ENCODE measurements at regions of chr2 and their contacts with region 1.

Region 1: DNA sequence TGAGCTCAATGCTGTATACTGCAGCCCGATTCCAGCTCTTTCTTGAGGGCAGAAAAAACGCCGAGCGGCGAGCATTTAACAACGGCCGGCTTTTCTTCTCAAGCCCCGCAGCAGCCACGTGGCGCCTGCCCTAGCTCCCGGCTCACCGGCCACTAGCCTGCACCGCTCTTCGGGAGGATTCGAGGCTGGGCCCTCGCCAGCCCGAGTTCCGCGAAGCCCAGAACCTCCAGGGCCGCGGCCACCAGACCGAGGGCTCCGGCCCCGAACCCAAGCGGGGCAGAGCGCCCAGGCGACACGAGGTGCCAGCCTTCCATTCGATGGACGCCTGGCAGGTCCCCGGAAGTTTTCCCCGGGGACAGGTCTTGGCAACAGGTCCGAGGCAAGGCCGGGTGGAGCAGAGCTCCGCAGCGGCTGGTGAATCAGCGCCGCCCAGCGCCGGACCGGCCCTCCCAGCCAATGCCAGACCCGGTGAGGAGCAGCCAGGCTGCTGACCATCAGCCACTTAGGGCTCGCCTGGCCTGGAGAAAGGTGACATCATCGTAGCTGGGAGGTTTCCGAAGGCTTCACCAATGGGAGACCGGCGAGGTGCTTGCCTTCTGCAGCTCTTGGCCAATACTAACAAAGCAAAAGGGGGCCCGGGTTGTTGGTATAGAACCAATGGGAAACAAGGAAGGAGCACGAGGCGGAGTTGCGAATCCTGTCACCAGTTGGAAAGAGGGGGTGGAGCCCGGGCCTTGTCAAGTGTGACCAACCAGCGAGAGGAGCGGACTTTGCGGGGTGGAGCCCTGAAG is 544 bp upstream of the MXD1 start:
- DNase-seq: no peak
- ATAC-seq: peak; percentile 91
- H3K4me3 Mint-ChIP-seq: peak overlapping the region; percentile 87
- H3K27ac Mint-ChIP-seq: peak overlapping the region; percentile 91
- H3K4me1 Mint-ChIP-seq: peaks cover 41% of the 10 kb centered on the region
- H3K27me3 Mint-ChIP-seq: no peaks in the 10 kb centered on the region
- CTCF ChIP-seq: no peak

Region 2: GRCh38 chr2:69902213-69902922 is 12.0 kb before region 1 on chr2:
- CTCF ChIA-PET with region 1: no interaction called
- POLR2A ChIA-PET with region 1: interaction called, 5 read pairs
- intact Hi-C with region 1: loop called (anchors 1 kb)
- DNase-seq: no peak
- ATAC-seq: peak; percentile 79
- H3K4me3 Mint-ChIP-seq: peak overlapping the region; percentile 76
- H3K27ac Mint-ChIP-seq: peak overlapping the region; percentile 92
- H3K4me1 Mint-ChIP-seq: peaks cover 41% of the 10 kb centered on the region
- H3K27me3 Mint-ChIP-seq: no peaks in the 10 kb centered on the region
- CTCF ChIP-seq: no peak

Region 3: DNA sequence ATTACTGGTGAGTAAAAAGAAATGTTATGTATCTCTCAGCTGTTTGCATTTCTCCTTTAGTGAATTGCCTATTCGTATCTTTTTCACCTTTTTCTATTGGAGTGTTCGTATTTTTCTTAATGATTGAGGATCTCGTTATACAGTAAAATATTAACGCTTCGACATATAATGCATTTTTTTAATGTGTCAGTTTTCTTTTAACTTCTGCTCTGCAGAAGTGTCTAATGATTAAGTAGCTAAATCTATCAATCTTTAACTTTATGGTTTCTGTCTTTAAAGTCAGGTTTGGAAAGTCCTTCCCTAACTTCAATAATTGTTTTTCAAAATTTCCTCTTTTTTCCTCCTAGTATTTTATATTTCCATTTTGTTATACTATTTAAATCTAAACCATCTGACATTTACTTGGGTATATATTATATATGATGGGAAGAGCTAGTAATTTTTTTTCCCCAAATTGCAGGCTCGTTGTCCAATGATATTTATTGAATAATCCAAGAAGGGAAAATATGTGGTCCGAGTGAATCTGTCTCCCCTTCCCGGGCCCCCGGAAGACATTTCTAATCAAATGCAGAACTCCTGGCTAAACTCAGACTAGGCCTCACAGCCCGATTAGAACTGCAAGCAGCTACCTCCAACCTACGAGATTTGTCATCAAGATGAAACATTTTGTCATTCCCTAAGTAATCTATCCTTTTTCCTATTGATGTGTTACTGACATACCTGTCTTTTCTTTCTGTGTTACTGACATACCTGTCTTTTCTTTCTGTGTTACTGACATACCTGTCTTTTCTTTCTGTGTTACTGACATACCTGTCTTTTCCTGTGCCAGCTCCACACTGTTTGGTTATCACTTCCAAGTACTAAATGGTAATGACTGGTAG is 190.1 kb after region 1 on chr2:
- CTCF ChIA-PET with region 1: interaction called, 6 read pairs
- POLR2A ChIA-PET with region 1: interaction called, 16 read pairs
- intact Hi-C with region 1: no loop called
- DNase-seq: no peak
- ATAC-seq: no peak
- H3K4me3 Mint-ChIP-seq: peak overlapping the region; percentile 80
- H3K27ac Mint-ChIP-seq: peak overlapping the region; percentile 94
- H3K4me1 Mint-ChIP-seq: peaks cover 55% of the 10 kb centered on the region
- H3K27me3 Mint-ChIP-seq: no peaks in the 10 kb centered on the region
- CTCF ChIP-seq: no peak

Region 4: GRCh38 chr2:70181363-70181956 is 267.1 kb after region 1 on chr2:
- CTCF ChIA-PET with region 1: interaction called, 11 read pairs
- POLR2A ChIA-PET with region 1: interaction called, 7 read pairs
- intact Hi-C with region 1: no loop called
- DNase-seq: peak; percentile 19
- ATAC-seq: peak; percentile 75
- H3K4me3 Mint-ChIP-seq: peak overlapping the region; percentile 71
- H3K27ac Mint-ChIP-seq: peak overlapping the region; percentile 75
- H3K4me1 Mint-ChIP-seq: peaks cover 15% of the 10 kb centered on the region
- H3K27me3 Mint-ChIP-seq: no peaks in the 10 kb centered on the region
- CTCF ChIP-seq: no peak

Region 5: DNA sequence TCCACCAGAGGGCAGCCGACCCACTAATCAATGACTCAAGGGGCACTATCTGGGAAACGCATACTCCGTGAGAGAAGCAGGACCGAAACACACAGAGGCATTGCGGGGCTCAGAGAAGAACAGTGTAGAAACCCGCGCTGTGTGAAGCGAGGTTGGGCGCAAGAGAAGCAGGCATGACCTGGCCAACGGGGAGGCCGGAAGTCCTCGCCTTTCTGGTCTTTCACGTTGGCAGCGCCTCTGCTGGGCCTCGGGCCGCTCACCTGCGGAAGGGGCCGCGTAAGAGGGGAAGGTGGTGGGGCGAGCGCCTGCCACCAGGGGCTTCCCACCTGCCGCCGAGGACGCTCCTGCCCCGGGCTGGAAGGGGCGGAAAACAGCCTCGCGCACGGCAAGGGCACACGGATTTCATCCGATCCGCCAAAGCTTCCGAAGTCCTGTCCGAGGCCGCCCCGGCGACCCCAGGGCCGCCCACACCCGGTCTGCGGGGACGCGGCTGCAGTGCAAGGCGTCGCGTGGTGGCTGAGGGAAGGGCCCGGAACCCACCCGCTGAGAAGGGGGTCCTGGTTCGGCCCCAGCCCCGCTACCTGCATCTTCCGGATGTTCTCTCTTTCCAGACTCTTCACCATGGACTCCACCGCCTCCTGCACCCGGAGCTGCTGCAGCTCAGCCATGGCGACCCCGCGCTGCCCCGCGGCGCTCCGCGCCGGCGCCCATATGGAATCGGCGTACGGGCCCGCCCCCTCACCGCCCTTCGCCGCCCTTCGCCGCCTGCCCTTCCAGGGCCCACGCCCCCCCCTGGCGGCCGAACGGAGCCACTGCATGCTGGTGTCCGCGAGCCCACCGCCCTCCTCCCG is 387.2 kb after region 1 on chr2 and contains the start of gene FAM136A:
- CTCF ChIA-PET with region 1: interaction called, 76 read pairs
- POLR2A ChIA-PET with region 1: interaction called, 37 read pairs
- intact Hi-C with region 1: loop called (anchors 1 kb)
- DNase-seq: peak; percentile 90
- ATAC-seq: peak; percentile 92
- H3K4me3 Mint-ChIP-seq: peak within 1 kb of the TSS; percentile 90
- H3K27ac Mint-ChIP-seq: peak within 1 kb of the TSS; percentile 95
- H3K4me1 Mint-ChIP-seq: peaks cover 22% of the 10 kb centered on the region
- H3K27me3 Mint-ChIP-seq: no peaks in the 10 kb centered on the region
- CTCF ChIP-seq: no peak
- total RNA-seq, gene FAM136A: 38.9 and 41.0 TPM in 2 replicates

Region 6: GRCh38 chr2:70570041-70570663 is 655.8 kb after region 1 on chr2:
- CTCF ChIA-PET with region 1: no interaction called
- POLR2A ChIA-PET with region 1: no interaction called
- intact Hi-C with region 1: no loop called
- DNase-seq: no peak
- ATAC-seq: no peak
- H3K4me3 Mint-ChIP-seq: no peak overlapping the region
- H3K27ac Mint-ChIP-seq: no peak overlapping the region
- H3K4me1 Mint-ChIP-seq: no peaks in the 10 kb centered on the region
- H3K27me3 Mint-ChIP-seq: peaks cover 28% of the 10 kb centered on the region
- CTCF ChIP-seq: no peak

Region 7: DNA sequence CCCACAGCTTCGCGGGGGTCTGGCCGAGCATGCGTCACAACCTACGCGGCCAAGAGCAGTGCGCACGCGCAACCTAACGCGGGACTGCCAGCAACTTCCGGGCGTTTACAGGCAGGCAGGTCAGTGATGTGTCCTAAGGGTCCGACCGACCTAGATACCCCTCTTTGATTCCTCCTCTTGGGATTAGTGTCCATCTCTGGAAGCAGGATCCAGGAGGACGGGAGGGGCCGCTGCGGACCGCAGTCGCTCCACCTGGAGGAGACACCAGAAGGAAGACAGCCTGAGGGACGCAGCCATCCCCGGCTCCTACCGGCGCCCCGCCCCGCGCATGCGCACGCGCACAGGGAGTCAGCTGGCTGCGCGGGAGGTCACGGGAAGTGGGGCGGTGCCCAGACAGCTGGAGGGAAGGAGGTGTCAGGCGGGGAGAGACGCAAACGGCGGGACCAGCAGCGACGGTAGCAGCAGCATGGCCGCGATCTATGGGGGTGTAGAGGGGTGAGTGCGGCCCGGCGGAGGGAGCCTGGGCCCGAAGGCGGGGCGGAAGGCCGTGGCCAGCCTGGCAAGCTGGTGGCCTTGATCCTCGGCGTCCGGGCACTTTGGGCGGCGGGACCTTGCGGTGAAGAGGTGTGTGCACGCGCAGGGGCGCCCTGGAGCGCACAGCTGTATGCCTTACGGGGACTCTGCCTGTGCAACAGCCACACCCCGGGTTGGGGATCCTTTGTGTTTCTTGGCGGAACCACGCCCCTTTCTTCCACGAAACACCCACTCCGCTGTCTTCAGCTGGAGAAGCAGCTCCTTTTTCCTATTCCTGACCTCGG is 1154.1 kb after region 1 on chr2 and contains the start of gene NAGK:
- CTCF ChIA-PET with region 1: no interaction called
- POLR2A ChIA-PET with region 1: interaction called, 4 read pairs
- intact Hi-C with region 1: loop called (anchors 10 kb)
- DNase-seq: peak; percentile 98
- ATAC-seq: peak; percentile 68
- H3K4me3 Mint-ChIP-seq: peak within 1 kb of the TSS; percentile 97
- H3K27ac Mint-ChIP-seq: peak within 1 kb of the TSS; percentile 99
- H3K4me1 Mint-ChIP-seq: peaks cover 91% of the 10 kb centered on the region
- H3K27me3 Mint-ChIP-seq: no peaks in the 10 kb centered on the region
- CTCF ChIP-seq: no peak
- total RNA-seq, gene NAGK: 175 and 208 TPM in 2 replicates

Measured in activated B cell treated with CpG ODN at 0.5 μM for 24 hours (primary cell).